MCF 10A (cell line): ENCODE measurements at regions of chr9 and their contacts with region 1.

Region 1: GRCh38 chr9:95004411-95005277 is 278.1 kb downstream of the AOPEP start:
- DNase-seq: peak; percentile 51
- H3K4me3 Mint-ChIP-seq: peak overlapping the region; percentile 85
- H3K27ac Mint-ChIP-seq: peak overlapping the region; percentile 97
- H3K4me1 Mint-ChIP-seq: peaks cover 35% of the 10 kb centered on the region
- H3K27me3 Mint-ChIP-seq: no peaks in the 10 kb centered on the region
- CTCF ChIP-seq: no peak

Region 2: GRCh38 chr9:94498801-94499453 is 505.7 kb before region 1 on chr9:
- CTCF ChIA-PET with region 1: no interaction called
- POLR2A ChIA-PET with region 1: no interaction called
- intact Hi-C with region 1: no loop called
- DNase-seq: no peak
- H3K4me3 Mint-ChIP-seq: no peak overlapping the region
- H3K27ac Mint-ChIP-seq: no peak overlapping the region
- H3K4me1 Mint-ChIP-seq: no peaks in the 10 kb centered on the region
- H3K27me3 Mint-ChIP-seq: peaks cover 37% of the 10 kb centered on the region
- CTCF ChIP-seq: no peak

Region 3: DNA sequence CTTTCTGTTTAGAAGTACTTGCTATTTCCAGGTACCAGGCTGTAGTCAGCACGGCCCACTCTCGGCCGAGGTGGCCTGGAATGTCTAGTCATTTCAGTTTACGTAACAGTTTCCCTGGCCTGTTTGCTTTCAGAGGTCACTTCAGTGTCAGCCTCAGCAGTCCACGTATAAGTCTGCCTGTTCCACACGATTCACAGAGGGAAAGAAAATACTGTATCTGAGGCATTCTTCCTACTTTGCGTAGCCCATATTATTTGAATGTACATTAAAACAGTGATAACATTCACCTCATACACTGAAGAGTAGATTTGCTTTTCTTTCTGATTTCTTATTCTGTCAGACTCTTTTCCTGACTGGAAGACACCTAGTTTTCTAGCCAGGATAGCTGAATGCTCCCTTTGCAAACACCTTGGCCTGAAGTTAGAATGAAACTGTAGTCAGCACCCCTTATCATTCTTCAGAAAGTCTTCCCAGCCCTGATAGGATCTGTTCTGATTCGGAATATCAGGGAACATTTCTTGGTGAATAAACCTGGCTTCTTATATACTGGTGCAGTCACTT is 137.3 kb before region 1 on chr9:
- CTCF ChIA-PET with region 1: no interaction called
- POLR2A ChIA-PET with region 1: interaction called, 32 read pairs
- intact Hi-C with region 1: loop called (anchors 2 kb)
- DNase-seq: peak; percentile 82
- H3K4me3 Mint-ChIP-seq: peak overlapping the region; percentile 31
- H3K27ac Mint-ChIP-seq: peak overlapping the region; percentile 89
- H3K4me1 Mint-ChIP-seq: peaks cover 44% of the 10 kb centered on the region
- H3K27me3 Mint-ChIP-seq: no peaks in the 10 kb centered on the region
- CTCF ChIP-seq: no peak

Region 4: GRCh38 chr9:94922098-94922607 is 82.5 kb before region 1 on chr9:
- CTCF ChIA-PET with region 1: interaction called, 8 read pairs
- POLR2A ChIA-PET with region 1: interaction called, 26 read pairs
- intact Hi-C with region 1: loop called (anchors 2 kb)
- DNase-seq: peak; percentile 82
- H3K4me3 Mint-ChIP-seq: peak overlapping the region; percentile 43
- H3K27ac Mint-ChIP-seq: peak overlapping the region; percentile 85
- H3K4me1 Mint-ChIP-seq: peaks cover 75% of the 10 kb centered on the region
- H3K27me3 Mint-ChIP-seq: no peaks in the 10 kb centered on the region
- CTCF ChIP-seq: no peak

Region 5: DNA sequence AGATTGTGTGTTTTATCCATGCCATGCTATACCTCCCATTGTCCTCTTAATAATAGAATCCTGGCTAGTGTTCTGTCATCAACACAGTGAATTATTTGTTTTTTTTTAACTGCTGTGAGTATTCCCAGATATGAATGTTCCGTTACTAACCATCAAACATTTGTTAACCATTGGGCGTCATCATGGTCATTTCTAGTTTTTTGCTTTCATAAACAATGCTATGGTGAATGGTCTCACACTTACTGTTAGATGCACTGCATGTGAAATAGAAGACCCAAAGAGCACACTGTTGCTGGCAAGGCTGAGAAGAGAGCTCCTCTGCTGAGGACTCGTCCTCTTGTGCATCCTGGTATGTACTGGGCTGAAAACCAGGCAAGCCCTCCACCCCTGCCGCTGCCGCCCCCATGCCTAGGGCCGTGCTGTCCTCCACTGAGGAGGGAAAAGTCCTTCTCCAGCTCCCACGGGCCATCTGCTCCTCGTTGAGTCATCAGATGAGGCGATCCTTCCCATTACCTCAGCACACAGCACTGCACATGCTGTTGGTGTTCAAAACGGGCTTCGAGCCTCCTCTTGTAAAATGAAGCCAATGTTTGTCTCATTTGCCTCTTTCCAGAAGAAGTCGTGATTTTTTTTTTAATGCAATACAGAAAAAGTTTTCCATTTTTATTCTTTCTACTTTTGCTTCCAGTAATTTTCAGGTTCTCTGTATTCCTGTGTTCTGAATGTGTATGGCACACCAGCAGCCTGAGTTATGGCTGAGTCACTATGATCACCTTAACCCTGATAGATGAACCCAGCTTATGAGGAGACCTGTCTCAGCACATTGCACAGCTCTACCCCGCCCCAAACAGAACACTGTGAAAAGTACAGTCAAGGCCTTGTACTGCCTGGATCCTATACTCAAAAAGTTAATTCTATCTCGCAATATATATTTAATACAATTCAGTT is 59.2 kb before region 1 on chr9:
- CTCF ChIA-PET with region 1: interaction called, 4 read pairs
- POLR2A ChIA-PET with region 1: interaction called, 21 read pairs
- intact Hi-C with region 1: no loop called
- DNase-seq: peak; percentile 82
- H3K4me3 Mint-ChIP-seq: peak overlapping the region; percentile 33
- H3K27ac Mint-ChIP-seq: peak overlapping the region; percentile 86
- H3K4me1 Mint-ChIP-seq: peaks cover 56% of the 10 kb centered on the region
- H3K27me3 Mint-ChIP-seq: no peaks in the 10 kb centered on the region
- CTCF ChIP-seq: no peak

Region 6: DNA sequence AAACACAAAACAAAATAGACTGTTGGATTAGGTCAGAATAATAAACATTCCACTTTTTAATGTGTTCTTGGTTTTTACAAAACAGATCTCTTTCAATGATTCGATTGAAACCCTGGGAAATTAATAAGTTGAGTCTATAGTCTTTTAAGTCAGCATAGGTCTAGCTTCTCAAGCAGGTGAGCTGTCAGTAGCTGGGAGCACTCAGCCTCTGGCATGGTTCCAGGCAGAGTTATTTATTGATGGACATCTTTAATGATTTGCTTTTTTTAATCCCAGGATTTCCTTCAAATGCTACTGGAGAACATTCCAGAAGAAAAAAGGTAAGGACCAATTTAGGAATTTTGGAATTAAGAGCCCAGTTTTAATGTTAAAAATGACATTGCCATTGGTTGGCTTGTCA is 37.2 kb before region 1 on chr9:
- CTCF ChIA-PET with region 1: no interaction called
- POLR2A ChIA-PET with region 1: no interaction called
- intact Hi-C with region 1: no loop called
- DNase-seq: no peak
- H3K4me3 Mint-ChIP-seq: no peak overlapping the region
- H3K27ac Mint-ChIP-seq: no peak overlapping the region
- H3K4me1 Mint-ChIP-seq: no peaks in the 10 kb centered on the region
- H3K27me3 Mint-ChIP-seq: no peaks in the 10 kb centered on the region
- CTCF ChIP-seq: no peak

Region 7: DNA sequence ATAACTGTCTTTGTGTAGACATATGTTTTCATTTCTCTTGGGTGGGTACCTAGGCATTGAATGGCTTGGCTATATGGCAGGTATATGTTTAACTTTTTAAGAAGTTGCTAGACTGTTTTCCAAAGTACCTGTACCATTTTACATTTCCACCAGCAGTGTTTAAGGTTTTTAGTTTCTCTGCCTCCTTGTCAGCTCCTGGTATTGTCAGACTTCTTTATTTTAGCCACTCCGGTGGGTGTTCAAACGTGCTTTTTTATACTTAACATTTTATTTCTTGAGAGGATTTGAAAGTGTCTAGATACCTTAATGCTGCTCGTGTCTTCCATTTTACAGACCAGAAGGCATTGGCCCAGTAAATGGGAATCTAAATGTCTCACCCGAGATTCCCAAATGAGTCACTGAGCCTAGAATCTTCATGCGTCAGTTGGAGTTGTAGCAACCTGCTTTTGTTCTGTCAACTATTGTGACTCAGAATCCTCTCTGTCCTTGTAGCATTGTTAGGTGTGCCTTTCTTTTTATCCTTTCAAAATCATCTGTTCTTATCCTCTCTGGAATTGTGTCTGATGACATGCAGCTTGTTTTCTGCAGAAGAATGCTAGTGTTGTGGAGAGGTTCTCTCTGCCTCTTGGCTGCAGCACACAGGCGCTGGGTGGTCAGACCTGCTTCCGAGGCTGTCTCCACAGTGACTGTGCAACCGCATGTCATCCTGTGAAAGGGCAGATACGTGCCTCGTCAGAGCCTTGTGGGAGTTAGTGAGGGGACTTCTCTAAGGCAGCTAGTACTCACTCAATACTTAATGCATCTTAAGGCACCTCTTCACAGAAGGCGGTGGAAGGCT is 13.7 kb after region 1 on chr9:
- CTCF ChIA-PET with region 1: interaction called, 5 read pairs
- POLR2A ChIA-PET with region 1: interaction called, 134 read pairs
- intact Hi-C with region 1: no loop called
- DNase-seq: peak; percentile 97
- H3K4me3 Mint-ChIP-seq: peak overlapping the region; percentile 31
- H3K27ac Mint-ChIP-seq: peak overlapping the region; percentile 94
- H3K4me1 Mint-ChIP-seq: peaks cover 41% of the 10 kb centered on the region
- H3K27me3 Mint-ChIP-seq: no peaks in the 10 kb centered on the region
- CTCF ChIP-seq: no peak

Region 8: GRCh38 chr9:95107001-95107749 is 102.5 kb after region 1 on chr9:
- CTCF ChIA-PET with region 1: no interaction called
- POLR2A ChIA-PET with region 1: interaction called, 3 read pairs
- intact Hi-C with region 1: loop called (anchors 5 kb)
- DNase-seq: no peak
- H3K4me3 Mint-ChIP-seq: no peak overlapping the region
- H3K27ac Mint-ChIP-seq: peak overlapping the region; percentile 23
- H3K4me1 Mint-ChIP-seq: peaks cover 11% of the 10 kb centered on the region
- H3K27me3 Mint-ChIP-seq: no peaks in the 10 kb centered on the region
- CTCF ChIP-seq: no peak